CD4-positive, alpha-beta memory T cell (primary cell): ENCODE measurements at regions of chr5 and their contacts with region 1.

Region 1: DNA sequence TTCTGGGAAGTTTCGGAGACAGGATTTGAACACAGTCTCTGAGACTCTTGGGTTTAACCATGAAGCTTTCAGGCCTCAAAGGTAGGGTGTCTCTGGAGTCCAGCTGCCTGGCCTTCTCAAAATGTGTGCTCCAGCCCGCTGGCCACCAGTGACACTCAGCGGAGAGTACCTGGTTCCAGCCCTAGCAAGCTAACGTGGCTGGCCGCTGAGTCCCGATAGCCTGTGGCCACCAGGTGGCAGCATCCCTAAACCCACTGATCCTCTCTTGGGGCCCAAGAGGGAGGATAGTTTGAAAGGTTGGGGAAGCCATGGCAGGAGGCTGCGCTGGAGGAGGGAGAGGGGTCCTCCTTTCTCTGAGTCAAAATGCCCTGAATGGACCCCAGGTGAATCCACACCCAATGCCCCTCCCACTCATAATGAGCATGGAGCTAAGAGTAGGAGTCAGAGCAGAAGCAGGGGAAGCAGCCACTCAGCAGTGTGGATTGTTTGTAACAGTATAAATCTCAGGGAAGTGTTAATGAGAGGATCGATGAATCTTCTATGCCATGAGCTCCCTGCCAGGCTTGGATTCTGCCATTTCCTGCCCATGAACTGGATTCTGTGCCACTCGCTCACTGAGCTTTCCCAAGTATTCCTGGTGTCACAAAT is 5.4 kb upstream of the TIFAB start:
- DNase-seq: peak; percentile 19 to 46 (median 24)
- H3K4me3 ChIP-seq: no peak overlapping the region
- H3K4me3 Mint-ChIP-seq: no peak overlapping the region
- H3K27ac ChIP-seq: no peak overlapping the region
- H3K27ac Mint-ChIP-seq: no peak overlapping the region
- H3K4me1 ChIP-seq: no peaks in the 10 kb centered on the region
- H3K4me1 Mint-ChIP-seq: peaks cover 0 to 3% (median 1%) of the 10 kb centered on the region in 4 donors
- H3K27me3 ChIP-seq: peaks cover 4% of the 10 kb centered on the region
- H3K27me3 Mint-ChIP-seq: peaks cover 17% of the 10 kb centered on the region in 2 donors

Region 2: GRCh38 chr5:134964359-134965270 is 492.9 kb before region 1 on chr5:
- CTCF ChIA-PET with region 1: no interaction called
- POLR2A ChIA-PET with region 1: no interaction called
- intact Hi-C with region 1: no loop called
- DNase-seq: peak; percentile 50 to 61 (median 57)
- H3K4me3 ChIP-seq: no peak overlapping the region
- H3K4me3 Mint-ChIP-seq: peak overlapping the region in 6 of 8 donors; percentile 18 to 82 (median 59)
- H3K27ac ChIP-seq: peak overlapping the region; percentile 0
- H3K27ac Mint-ChIP-seq: peak overlapping the region; percentile 74 to 96 (median 91)
- H3K4me1 ChIP-seq: peaks cover 21% of the 10 kb centered on the region
- H3K4me1 Mint-ChIP-seq: peaks cover 15 to 26% (median 21%) of the 10 kb centered on the region in 4 donors
- H3K27me3 ChIP-seq: no peaks in the 10 kb centered on the region
- H3K27me3 Mint-ChIP-seq: no peaks in the 10 kb centered on the region

Region 3: GRCh38 chr5:135426102-135427082 is 31.2 kb before region 1 on chr5:
- CTCF ChIA-PET with region 1: interaction called, 11 read pairs
- POLR2A ChIA-PET with region 1: no interaction called
- intact Hi-C with region 1: no loop called
- DNase-seq: peak in 4 of 5 donors; percentile 19 to 30 (median 24)
- H3K4me3 ChIP-seq: no peak overlapping the region
- H3K4me3 Mint-ChIP-seq: no peak overlapping the region
- H3K27ac ChIP-seq: no peak overlapping the region
- H3K27ac Mint-ChIP-seq: no peak overlapping the region
- H3K4me1 ChIP-seq: no peaks in the 10 kb centered on the region
- H3K4me1 Mint-ChIP-seq: peaks cover 0 to 3% (median 0%) of the 10 kb centered on the region in 4 donors
- H3K27me3 ChIP-seq: peaks cover 6% of the 10 kb centered on the region
- H3K27me3 Mint-ChIP-seq: peaks cover 21 to 23% of the 10 kb centered on the region in 2 donors

Region 4: GRCh38 chr5:135437796-135438560 is 19.6 kb before region 1 on chr5:
- CTCF ChIA-PET with region 1: interaction called, 10 read pairs
- POLR2A ChIA-PET with region 1: no interaction called
- intact Hi-C with region 1: no loop called
- DNase-seq: no peak
- H3K4me3 ChIP-seq: no peak overlapping the region
- H3K4me3 Mint-ChIP-seq: no peak overlapping the region
- H3K27ac ChIP-seq: no peak overlapping the region
- H3K27ac Mint-ChIP-seq: no peak overlapping the region
- H3K4me1 ChIP-seq: no peaks in the 10 kb centered on the region
- H3K4me1 Mint-ChIP-seq: no peaks in the 10 kb centered on the region
- H3K27me3 ChIP-seq: no peaks in the 10 kb centered on the region
- H3K27me3 Mint-ChIP-seq: peaks cover 6 to 10% of the 10 kb centered on the region in 2 donors

Region 5: DNA sequence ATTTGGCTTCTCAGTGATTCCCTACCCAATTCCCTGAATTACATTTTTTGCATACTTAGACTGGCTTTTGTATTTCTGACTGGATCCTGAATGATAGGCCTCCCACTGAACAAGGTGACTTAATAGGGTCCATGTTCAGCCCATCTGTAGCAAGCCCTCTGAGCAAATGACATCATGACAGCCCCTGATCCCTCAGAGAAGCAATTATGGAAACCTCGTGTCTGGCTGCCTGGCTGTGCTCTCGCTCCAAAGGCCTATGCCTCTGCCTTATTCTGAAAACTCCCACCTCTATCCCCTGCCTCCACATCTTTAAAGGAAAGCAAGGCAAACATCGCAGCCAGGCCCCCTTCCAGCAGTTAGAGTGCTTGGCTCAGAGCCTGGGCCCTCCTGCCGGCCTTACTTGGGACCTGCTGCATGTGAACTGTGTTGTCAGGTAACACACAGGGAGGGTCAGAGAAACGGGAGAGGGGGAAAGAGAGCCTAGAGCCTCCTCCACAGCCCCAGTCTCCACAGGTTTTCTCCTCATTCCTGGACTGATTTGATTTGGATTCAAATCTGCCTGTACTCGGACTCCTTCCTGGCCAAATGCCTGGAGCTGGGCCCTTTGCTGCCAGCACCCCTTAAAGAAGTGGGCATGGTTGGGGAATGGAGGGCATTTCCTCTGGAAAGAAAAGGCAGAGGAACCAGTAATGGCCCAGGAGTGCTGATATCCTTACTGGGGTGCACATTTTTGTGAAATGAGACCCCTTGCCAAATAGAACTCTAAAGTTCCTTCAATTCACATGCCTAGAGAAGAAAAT is 14.2 kb before region 1 on chr5:
- CTCF ChIA-PET with region 1: interaction called, 27 read pairs
- POLR2A ChIA-PET with region 1: no interaction called
- intact Hi-C with region 1: no loop called
- DNase-seq: no peak
- H3K4me3 ChIP-seq: no peak overlapping the region
- H3K4me3 Mint-ChIP-seq: no peak overlapping the region
- H3K27ac ChIP-seq: no peak overlapping the region
- H3K27ac Mint-ChIP-seq: no peak overlapping the region
- H3K4me1 ChIP-seq: no peaks in the 10 kb centered on the region
- H3K4me1 Mint-ChIP-seq: no peaks in the 10 kb centered on the region
- H3K27me3 ChIP-seq: no peaks in the 10 kb centered on the region
- H3K27me3 Mint-ChIP-seq: peaks cover 0 to 7% of the 10 kb centered on the region in 2 donors

Region 6: GRCh38 chr5:135478938-135479337 is 21.4 kb after region 1 on chr5:
- CTCF ChIA-PET with region 1: interaction called, 13 read pairs
- POLR2A ChIA-PET with region 1: no interaction called
- intact Hi-C with region 1: no loop called
- DNase-seq: no peak
- H3K4me3 ChIP-seq: no peak overlapping the region
- H3K4me3 Mint-ChIP-seq: no peak overlapping the region
- H3K27ac ChIP-seq: no peak overlapping the region
- H3K27ac Mint-ChIP-seq: no peak overlapping the region
- H3K4me1 ChIP-seq: no peaks in the 10 kb centered on the region
- H3K4me1 Mint-ChIP-seq: no peaks in the 10 kb centered on the region
- H3K27me3 ChIP-seq: no peaks in the 10 kb centered on the region
- H3K27me3 Mint-ChIP-seq: peaks cover 9 to 26% of the 10 kb centered on the region in 2 donors

Region 7: DNA sequence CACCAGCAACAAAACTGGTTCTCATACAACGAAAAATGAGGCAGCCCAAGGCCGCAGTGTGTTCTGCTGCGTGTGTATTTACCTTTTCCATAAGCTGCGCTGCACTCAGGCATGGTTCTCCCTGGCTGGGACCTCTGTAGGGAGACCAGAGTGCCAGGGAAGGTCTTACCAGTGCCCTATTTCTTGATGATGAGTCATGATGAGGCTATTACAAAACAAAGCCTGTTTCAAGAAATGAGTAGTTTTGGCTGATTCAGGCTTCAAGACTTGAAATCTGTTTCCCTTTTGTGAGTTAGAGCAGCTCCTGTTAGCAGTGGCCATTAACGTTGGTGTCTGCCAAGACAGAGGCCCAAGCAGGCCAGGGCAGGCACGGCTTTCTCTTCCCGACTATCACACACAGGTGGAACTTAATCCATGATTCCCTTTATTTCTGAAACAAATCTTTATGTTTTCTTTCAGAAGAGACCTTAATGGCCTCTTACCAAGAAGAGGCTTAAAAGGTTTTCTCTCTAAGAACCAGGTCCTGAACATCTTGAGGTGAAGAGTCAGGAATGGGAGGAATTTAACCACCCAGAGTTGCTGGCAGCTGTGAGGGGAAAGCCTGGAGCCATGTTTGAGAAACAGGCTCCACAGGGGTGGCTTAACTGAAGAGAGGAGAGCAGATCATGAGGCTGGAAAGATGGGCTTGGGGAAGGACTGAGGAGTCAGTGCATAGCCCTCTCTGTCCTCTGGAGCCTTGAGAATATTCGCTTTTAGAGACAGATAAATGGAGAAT is 36.0 kb after region 1 on chr5:
- CTCF ChIA-PET with region 1: no interaction called
- POLR2A ChIA-PET with region 1: no interaction called
- intact Hi-C with region 1: no loop called
- DNase-seq: no peak
- H3K4me3 ChIP-seq: no peak overlapping the region
- H3K4me3 Mint-ChIP-seq: no peak overlapping the region
- H3K27ac ChIP-seq: no peak overlapping the region
- H3K27ac Mint-ChIP-seq: no peak overlapping the region
- H3K4me1 ChIP-seq: no peaks in the 10 kb centered on the region
- H3K4me1 Mint-ChIP-seq: peaks cover 4 to 11% (median 6%) of the 10 kb centered on the region in 4 donors
- H3K27me3 ChIP-seq: peaks cover 10% of the 10 kb centered on the region
- H3K27me3 Mint-ChIP-seq: peaks cover 29 to 34% of the 10 kb centered on the region in 2 donors

Region 8: GRCh38 chr5:135551593-135552447 is 94.3 kb after region 1 on chr5:
- CTCF ChIA-PET with region 1: interaction called, 100 read pairs
- POLR2A ChIA-PET with region 1: no interaction called
- intact Hi-C with region 1: loop called (anchors 1 kb)
- DNase-seq: peak; percentile 33 to 48 (median 40)
- H3K4me3 ChIP-seq: no peak overlapping the region
- H3K4me3 Mint-ChIP-seq: no peak overlapping the region
- H3K27ac ChIP-seq: no peak overlapping the region
- H3K27ac Mint-ChIP-seq: no peak overlapping the region
- H3K4me1 ChIP-seq: no peaks in the 10 kb centered on the region
- H3K4me1 Mint-ChIP-seq: peaks cover 0 to 2% (median 1%) of the 10 kb centered on the region in 4 donors
- H3K27me3 ChIP-seq: peaks cover 5% of the 10 kb centered on the region
- H3K27me3 Mint-ChIP-seq: peaks cover 22 to 45% of the 10 kb centered on the region in 2 donors

Region 9: GRCh38 chr5:135565725-135566421 is 108.3 kb after region 1 on chr5:
- CTCF ChIA-PET with region 1: interaction called, 55 read pairs
- POLR2A ChIA-PET with region 1: no interaction called
- intact Hi-C with region 1: no loop called
- DNase-seq: peak; percentile 26 to 49 (median 43)
- H3K4me3 ChIP-seq: no peak overlapping the region
- H3K4me3 Mint-ChIP-seq: peak overlapping the region in 1 of 8 donors; percentile 37
- H3K27ac ChIP-seq: no peak overlapping the region
- H3K27ac Mint-ChIP-seq: no peak overlapping the region
- H3K4me1 ChIP-seq: no peaks in the 10 kb centered on the region
- H3K4me1 Mint-ChIP-seq: peaks cover 5 to 12% (median 6%) of the 10 kb centered on the region in 4 donors
- H3K27me3 ChIP-seq: no peaks in the 10 kb centered on the region
- H3K27me3 Mint-ChIP-seq: peaks cover 4 to 10% of the 10 kb centered on the region in 2 donors